Panc1 (cell line): ENCODE measurements at regions of chr12 and their contacts with region 1.

Region 1: GRCh38 chr12:112948806-112949205 is 10.5 kb downstream of the OAS3 start:
- DNase-seq: no peak
- ATAC-seq: no peak
- H3K4me3 ChIP-seq: no peak overlapping the region
- H3K27ac ChIP-seq: no peak overlapping the region
- H3K4me1 ChIP-seq: no peaks in the 10 kb centered on the region
- H3K27me3 ChIP-seq: no peaks in the 10 kb centered on the region
- CTCF ChIP-seq: no peak

Region 2: DNA sequence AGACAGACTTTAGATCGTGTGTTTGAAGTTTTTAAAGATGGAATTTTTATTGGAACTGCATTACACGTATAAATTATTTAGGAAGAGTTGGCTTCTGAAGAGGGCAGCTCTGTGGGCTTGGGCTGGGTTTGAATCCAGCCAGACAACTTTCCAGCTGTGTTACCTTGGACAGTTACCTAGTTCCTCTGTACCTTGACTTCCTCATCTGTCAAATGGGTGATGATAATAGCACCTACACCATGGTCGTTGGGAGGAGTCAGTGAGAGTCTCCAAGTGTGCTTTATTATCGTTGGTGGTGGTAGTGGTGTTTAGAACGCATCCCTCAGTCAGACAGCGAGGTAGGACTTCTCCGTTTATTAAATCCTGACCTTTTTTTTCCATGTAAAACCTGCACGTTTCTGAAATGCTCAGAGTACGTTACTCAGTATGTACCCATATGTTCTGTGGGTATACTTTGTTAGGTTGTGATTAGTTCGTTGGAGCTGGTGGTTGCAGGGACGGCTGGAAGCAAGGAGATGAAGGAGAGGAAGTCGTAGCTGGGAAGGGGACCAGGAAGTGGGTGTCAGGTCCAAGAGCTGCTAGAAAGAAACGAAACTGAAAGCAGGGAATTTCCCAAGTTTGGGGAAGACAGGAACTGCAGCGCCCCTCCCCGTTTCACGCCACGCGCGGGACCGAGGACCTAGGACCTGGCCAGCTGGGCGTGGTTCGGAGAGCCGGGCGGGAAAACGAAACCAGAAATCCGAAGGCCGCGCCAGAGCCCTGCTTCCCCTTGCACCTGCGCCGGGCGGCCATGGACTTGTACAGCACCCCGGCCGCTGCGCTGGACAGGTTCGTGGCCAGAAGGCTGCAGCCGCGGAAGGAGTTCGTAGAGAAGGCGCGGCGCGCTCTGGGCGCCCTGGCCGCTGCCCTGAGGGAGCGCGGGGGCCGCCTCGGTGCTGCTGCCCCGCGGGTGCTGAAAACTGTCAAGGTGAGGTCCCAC is 10.8 kb before region 1 on chr12 and contains the start of gene OAS3:
- CTCF ChIA-PET with region 1: no interaction called
- POLR2A ChIA-PET with region 1: interaction called, 11 read pairs
- in situ Hi-C with region 1: no loop called
- intact Hi-C with region 1: no loop called
- DNase-seq: peak; percentile 45
- ATAC-seq: peak; percentile 92
- H3K4me3 ChIP-seq: peak within 1 kb of the TSS; percentile 64 to 73
- H3K27ac ChIP-seq: peak within 1 kb of the TSS; percentile 76
- H3K4me1 ChIP-seq: peaks cover 13% of the 10 kb centered on the region; the same call in 1 of the 2 replicates
- H3K27me3 ChIP-seq: no peaks in the 10 kb centered on the region
- CTCF ChIP-seq: no peak
- total RNA-seq, gene OAS3: 33.3 TPM